CD14-positive monocyte (primary cell): ENCODE measurements at regions of chr11 and their contacts with region 1.

Region 1: DNA sequence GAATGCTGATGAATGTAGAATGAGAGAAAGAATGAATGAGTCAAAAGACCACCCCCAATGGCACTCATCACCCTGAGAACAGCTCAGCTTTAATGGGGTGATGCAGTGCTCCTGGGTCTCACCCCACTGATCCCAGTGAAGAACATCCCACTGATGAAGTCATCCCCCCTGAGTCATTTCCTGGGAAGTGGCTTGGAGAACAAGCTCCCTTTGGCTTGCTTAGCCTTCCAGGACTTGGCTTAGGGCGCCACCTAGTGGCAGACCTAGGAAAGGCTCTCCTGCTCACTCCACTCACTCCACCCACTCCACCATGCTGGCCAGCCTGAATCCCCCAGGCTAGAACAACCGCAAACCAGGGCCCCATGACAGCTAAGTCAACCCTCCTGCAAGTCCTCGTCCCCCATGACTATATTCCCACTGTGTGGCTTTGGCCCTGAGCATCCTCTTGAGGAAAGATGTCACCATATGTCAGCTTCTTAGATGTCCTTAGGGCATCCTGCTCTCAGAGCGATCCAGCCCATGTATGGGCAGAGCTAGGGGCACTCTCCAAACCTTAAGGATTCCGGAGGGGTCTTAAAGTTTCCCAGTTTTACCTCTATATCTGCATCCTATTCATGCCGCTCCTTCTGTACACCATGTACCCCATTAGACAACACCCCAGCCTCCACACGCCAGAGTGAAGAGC is 17.8 kb upstream of the TMPRSS13 start:
- DNase-seq: peak; percentile 81 to 96 (median 91)
- H3K4me3 ChIP-seq: no peak overlapping the region
- H3K4me3 Mint-ChIP-seq: no peak overlapping the region
- H3K27ac ChIP-seq: no peak overlapping the region
- H3K27ac Mint-ChIP-seq: peak overlapping the region; percentile 1 to 70 (median 54)
- H3K4me1 ChIP-seq: peaks cover 42 to 53% of the 10 kb centered on the region in 2 donors
- H3K4me1 Mint-ChIP-seq: peaks cover 59% of the 10 kb centered on the region
- H3K27me3 ChIP-seq: no peaks in the 10 kb centered on the region
- H3K27me3 Mint-ChIP-seq: peaks cover 1 to 7% (median 3%) of the 10 kb centered on the region in 3 donors
- CTCF ChIP-seq: peak; percentile 98

Region 2: DNA sequence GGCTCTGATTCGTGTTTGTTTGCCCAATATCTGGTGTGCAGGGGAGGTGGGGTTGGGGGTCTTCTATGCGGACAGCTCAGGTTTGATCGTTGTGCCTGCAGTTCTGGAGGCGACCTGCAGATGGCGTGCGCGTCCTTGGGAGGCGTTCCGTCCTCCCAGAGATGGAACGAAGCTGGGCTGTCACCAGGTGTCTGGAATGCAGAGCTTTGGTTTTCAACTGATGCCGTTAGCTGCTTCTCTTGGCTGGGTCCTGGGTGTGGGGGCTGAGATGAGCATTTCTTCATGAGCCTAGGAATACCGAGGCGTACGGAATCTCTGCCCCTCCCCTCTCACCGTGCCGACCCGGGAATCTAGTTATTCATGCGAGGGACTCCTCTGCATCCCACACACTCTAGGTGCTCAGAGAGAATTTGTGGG is 520.7 kb before region 1 on chr11:
- intact Hi-C with region 1: loop called (anchors 10 kb)
- DNase-seq: peak; percentile 30 to 52 (median 44)
- H3K4me3 ChIP-seq: no peak overlapping the region
- H3K4me3 Mint-ChIP-seq: no peak overlapping the region
- H3K27ac ChIP-seq: no peak overlapping the region
- H3K27ac Mint-ChIP-seq: no peak overlapping the region
- H3K4me1 ChIP-seq: no peaks in the 10 kb centered on the region
- H3K4me1 Mint-ChIP-seq: peaks cover 1% of the 10 kb centered on the region
- H3K27me3 ChIP-seq: no peaks in the 10 kb centered on the region
- H3K27me3 Mint-ChIP-seq: peaks cover 3 to 14% (median 5%) of the 10 kb centered on the region in 3 donors
- CTCF ChIP-seq: peak; percentile 96

Region 3: DNA sequence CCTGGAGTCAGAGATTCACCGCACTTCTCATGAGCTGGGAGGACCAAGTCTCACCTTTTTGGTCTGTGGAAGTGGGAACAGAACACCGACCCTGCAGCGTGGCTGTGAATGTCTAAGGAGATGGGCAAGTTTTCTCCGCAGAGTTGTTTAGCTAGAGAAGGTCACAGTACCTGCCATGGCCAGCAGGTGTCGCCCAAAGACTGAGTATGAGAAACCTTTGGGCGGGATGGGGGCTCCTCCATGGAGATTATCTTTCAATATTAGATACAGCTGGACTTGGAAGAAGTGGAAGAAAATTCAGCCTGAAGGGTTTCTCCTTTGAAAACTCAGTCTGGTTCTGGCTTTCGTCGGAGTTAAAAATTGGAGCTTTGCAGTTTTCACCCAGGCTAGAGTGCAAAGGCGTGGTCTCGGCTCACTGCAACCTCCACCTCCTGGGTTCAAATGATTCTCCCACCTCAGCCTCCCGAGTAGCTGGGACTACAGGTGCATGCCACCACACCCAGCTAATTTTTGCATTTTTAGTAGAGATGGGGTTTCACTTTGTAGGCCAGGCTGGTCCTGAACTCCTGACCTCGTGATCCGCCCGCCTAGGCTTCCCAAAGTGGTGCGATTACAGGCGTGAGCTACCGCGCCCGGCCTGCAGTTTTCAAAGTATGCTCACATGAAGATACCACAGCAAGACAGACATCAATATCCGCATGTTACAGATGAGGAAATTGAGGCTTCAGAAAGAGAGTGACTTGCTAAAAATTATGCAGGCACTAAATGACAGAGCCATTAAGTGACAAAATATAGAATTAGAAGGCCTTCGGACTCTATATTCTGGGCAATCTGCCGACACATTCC is 139.3 kb before region 1 on chr11:
- intact Hi-C with region 1: loop called in 1 of 2 experiments (anchors 5 kb)
- DNase-seq: peak; percentile 66 to 76 (median 76)
- H3K4me3 ChIP-seq: peak overlapping the region in 1 of 3 experiments; percentile 36
- H3K4me3 Mint-ChIP-seq: peak overlapping the region in 1 of 2 donors; percentile 75
- H3K27ac ChIP-seq: peak overlapping the region; percentile 68 to 85
- H3K27ac Mint-ChIP-seq: peak overlapping the region; percentile 81 to 97 (median 91)
- H3K4me1 ChIP-seq: peaks cover 54 to 56% of the 10 kb centered on the region in 2 donors
- H3K4me1 Mint-ChIP-seq: peaks cover 57% of the 10 kb centered on the region
- H3K27me3 ChIP-seq: no peaks in the 10 kb centered on the region
- H3K27me3 Mint-ChIP-seq: peaks cover 2 to 12% (median 3%) of the 10 kb centered on the region in 3 donors
- CTCF ChIP-seq: peak; percentile 99

Region 4: DNA sequence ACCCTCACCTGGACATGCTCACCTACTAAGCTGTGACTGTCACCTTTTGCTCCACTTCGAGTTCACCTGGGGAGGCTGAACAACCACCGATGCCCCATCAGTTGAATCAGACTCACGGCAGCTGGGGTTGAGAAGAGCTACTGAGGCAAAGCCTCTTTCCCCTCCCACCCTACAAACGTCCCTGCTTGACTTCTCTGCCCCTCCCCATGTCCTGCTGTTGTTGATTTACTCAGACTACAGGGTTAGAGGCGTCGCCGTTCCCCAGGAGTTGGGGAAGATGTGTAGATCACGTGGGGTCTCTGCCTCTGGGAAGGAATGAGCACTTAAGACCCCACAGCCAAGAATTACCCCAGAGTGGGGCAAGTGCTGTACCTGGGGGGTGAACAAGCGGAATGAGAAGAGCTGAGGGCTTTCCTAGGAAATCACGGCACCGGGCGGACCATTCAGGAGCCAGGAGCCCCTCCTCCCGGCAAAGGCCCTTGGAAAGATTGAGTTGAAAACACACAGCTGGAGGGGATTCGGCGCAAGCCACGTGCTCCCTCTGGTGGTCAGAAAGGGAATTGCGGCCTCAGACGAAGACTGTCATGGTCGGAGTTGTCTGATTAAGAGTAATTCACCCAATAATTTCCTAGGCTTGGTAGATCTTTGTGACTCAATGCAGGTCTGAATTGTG is 129.5 kb before region 1 on chr11:
- intact Hi-C with region 1: loop called (anchors 2 to 5 kb)
- DNase-seq: peak; percentile 87 to 96 (median 89)
- H3K4me3 ChIP-seq: no peak overlapping the region
- H3K4me3 Mint-ChIP-seq: no peak overlapping the region
- H3K27ac ChIP-seq: peak overlapping the region; percentile 99 to 100
- H3K27ac Mint-ChIP-seq: peak overlapping the region; percentile 95 to 99 (median 99)
- H3K4me1 ChIP-seq: peaks cover 69% of the 10 kb centered on the region in 2 donors
- H3K4me1 Mint-ChIP-seq: peaks cover 60% of the 10 kb centered on the region
- H3K27me3 ChIP-seq: no peaks in the 10 kb centered on the region
- H3K27me3 Mint-ChIP-seq: peaks cover 0 to 3% (median 2%) of the 10 kb centered on the region in 3 donors
- CTCF ChIP-seq: peak; percentile 99

Region 5: GRCh38 chr11:117843666-117844484 is 103.1 kb before region 1 on chr11:
- intact Hi-C with region 1: loop called in 1 of 2 experiments (anchors 2 kb)
- DNase-seq: peak; percentile 69 to 81 (median 70)
- H3K4me3 ChIP-seq: no peak overlapping the region
- H3K4me3 Mint-ChIP-seq: peak overlapping the region in 1 of 2 donors; percentile 35
- H3K27ac ChIP-seq: peak overlapping the region in 1 of 2 donors; percentile 99
- H3K27ac Mint-ChIP-seq: peak overlapping the region; percentile 89 to 100 (median 99)
- H3K4me1 ChIP-seq: peaks cover 51 to 52% of the 10 kb centered on the region in 2 donors
- H3K4me1 Mint-ChIP-seq: peaks cover 51% of the 10 kb centered on the region
- H3K27me3 ChIP-seq: no peaks in the 10 kb centered on the region
- H3K27me3 Mint-ChIP-seq: peaks cover 0 to 2% (median 0%) of the 10 kb centered on the region in 3 donors
- CTCF ChIP-seq: peak; percentile 99

Region 6: GRCh38 chr11:117885777-117886176 is 61.2 kb before region 1 on chr11:
- intact Hi-C with region 1: no loop called
- DNase-seq: no peak
- H3K4me3 ChIP-seq: no peak overlapping the region
- H3K4me3 Mint-ChIP-seq: no peak overlapping the region
- H3K27ac ChIP-seq: no peak overlapping the region
- H3K27ac Mint-ChIP-seq: no peak overlapping the region
- H3K4me1 ChIP-seq: no peaks in the 10 kb centered on the region
- H3K4me1 Mint-ChIP-seq: peaks cover 2% of the 10 kb centered on the region
- H3K27me3 ChIP-seq: no peaks in the 10 kb centered on the region
- H3K27me3 Mint-ChIP-seq: peaks cover 4 to 10% (median 6%) of the 10 kb centered on the region in 3 donors
- CTCF ChIP-seq: no peak

Region 7: DNA sequence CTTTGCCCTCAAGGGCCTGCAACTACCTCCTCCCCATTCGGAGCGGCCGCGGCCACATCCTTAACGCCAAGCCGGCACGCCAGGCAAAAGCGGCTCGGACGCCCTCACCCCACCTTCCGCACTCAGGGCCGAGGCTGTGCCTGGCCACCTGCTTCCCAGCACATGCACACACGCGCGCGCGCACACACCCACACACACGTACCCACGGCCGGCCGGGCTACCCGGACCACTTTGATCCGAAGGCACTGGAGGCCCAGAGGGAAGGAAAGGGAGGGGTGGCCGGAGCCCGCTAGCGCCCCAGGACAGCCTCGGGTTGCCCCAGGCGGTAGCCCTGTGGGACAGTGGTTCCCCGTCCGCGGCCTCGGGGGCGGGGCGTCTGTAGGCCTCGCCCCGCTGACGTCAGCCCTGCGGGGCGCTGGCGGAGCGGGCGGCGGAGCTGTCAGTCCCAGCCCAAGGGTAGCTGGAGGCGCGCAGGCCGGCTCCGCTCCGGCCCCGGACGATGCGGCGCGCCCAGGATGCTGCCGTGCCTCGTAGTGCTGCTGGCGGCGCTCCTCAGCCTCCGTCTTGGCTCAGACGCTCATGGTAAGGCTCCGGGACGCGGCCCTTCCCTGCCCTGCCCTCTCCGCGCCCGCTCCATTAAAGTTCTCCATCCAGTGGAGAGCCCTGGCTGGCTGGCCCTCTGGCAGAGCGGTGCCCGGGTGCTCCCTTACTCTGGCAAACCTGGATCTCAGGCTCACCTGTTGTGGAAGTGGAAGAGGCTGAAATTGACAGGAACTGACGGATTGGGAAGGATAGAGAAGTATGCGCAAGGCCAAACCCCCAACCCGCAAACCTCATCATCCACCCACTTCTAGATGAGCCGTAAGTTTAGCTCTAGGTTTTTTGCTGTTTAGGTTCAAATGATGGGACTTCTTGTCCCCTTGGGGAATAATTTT is 39.2 kb after region 1 on chr11 and contains the start of gene IL10RA:
- intact Hi-C with region 1: loop called (anchors 5 kb)
- DNase-seq: peak; percentile 93 to 95 (median 94)
- H3K4me3 ChIP-seq: peak within 1 kb of the TSS; percentile 95 to 99 (median 98)
- H3K4me3 Mint-ChIP-seq: peak within 1 kb of the TSS; percentile 93 to 98
- H3K27ac ChIP-seq: peak within 1 kb of the TSS; percentile 96 to 100
- H3K27ac Mint-ChIP-seq: peak within 1 kb of the TSS; percentile 96 to 100 (median 98)
- H3K4me1 ChIP-seq: peaks cover 58 to 63% of the 10 kb centered on the region in 2 donors
- H3K4me1 Mint-ChIP-seq: peaks cover 74% of the 10 kb centered on the region
- H3K27me3 ChIP-seq: no peaks in the 10 kb centered on the region
- H3K27me3 Mint-ChIP-seq: peaks cover 0 to 1% (median 1%) of the 10 kb centered on the region in 3 donors
- CTCF ChIP-seq: no peak
- polyA plus RNA-seq, gene IL10RA: 152 to 413 (median 226) TPM

Region 8: GRCh38 chr11:118051611-118052461 is 104.9 kb after region 1 on chr11:
- intact Hi-C with region 1: loop called (anchors 2 to 5 kb)
- DNase-seq: no peak
- H3K4me3 ChIP-seq: no peak overlapping the region
- H3K4me3 Mint-ChIP-seq: no peak overlapping the region
- H3K27ac ChIP-seq: no peak overlapping the region
- H3K27ac Mint-ChIP-seq: peak overlapping the region in 2 of 7 donors; percentile 10 to 43
- H3K4me1 ChIP-seq: peaks cover 13 to 15% of the 10 kb centered on the region in 2 donors
- H3K4me1 Mint-ChIP-seq: peaks cover 28% of the 10 kb centered on the region
- H3K27me3 ChIP-seq: no peaks in the 10 kb centered on the region
- H3K27me3 Mint-ChIP-seq: peaks cover 4 to 6% (median 6%) of the 10 kb centered on the region in 3 donors
- CTCF ChIP-seq: no peak

Region 9: GRCh38 chr11:118064956-118065355 is 118.0 kb after region 1 on chr11:
- intact Hi-C with region 1: no loop called
- DNase-seq: no peak
- H3K4me3 ChIP-seq: no peak overlapping the region
- H3K4me3 Mint-ChIP-seq: no peak overlapping the region
- H3K27ac ChIP-seq: no peak overlapping the region
- H3K27ac Mint-ChIP-seq: no peak overlapping the region
- H3K4me1 ChIP-seq: peaks cover 0 to 3% of the 10 kb centered on the region in 2 donors
- H3K4me1 Mint-ChIP-seq: peaks cover 9% of the 10 kb centered on the region
- H3K27me3 ChIP-seq: no peaks in the 10 kb centered on the region
- H3K27me3 Mint-ChIP-seq: peaks cover 2 to 6% (median 3%) of the 10 kb centered on the region in 3 donors
- CTCF ChIP-seq: no peak